ENCODE measurements at regions of chrX and their contacts with region 1.

Region 1: DNA sequence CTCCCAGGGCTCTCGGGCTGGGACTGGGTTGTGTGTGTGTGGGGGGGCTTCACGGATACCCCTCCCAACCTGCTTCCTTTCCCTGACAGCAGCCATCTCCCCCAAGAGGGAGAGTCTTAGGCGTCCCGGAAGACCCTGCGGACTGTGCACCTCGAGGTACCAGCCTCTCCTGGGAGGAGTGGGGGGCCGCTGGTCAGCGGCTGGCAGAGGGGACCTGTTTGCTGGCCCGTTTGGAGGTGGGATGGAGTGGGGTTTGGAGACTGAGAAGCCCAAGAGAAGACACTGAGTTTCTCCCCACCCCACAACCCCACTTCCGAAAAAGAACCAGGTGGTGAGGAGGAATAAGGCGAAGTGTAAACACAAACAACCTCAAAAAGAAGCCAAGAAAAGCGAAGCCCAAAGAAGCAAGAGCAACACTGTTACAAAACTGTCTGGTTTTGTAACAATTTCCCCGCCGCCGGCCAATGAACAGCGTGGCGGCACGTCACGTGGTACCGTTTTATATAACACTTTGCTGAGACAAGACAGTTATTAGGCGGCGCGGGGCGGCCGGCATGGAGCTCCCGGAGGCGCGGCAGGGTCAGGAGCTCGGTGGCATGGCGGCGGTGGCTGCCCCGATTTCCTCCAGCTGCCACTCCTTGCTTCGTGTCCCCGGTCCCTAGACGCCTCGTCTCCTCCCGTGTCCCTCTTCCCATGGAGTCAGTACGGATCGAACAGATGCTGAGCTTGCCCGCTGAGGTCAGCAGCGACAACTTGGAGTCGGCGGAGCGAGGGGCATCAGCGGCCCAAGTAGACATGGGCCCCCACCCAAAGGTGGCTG is at the start of gene LONRF3:
- DNase-seq: peak; percentile 77 to 87
- ATAC-seq: peak; percentile 55 to 75 (median 59)
- H3K4me3 ChIP-seq: peak within 1 kb of the TSS; percentile 85
- H3K27ac ChIP-seq: peak within 1 kb of the TSS; percentile 97
- H3K4me1 ChIP-seq: no peaks in the 10 kb centered on the region
- H3K27me3 ChIP-seq: peaks cover 0 to 15% (median 0%) of the 10 kb centered on the region in 3 donors
- CTCF ChIP-seq: no peak
- total RNA-seq, gene LONRF3: 9.4 to 55.8 (median 27.3) TPM

Region 2: GRCh38 chrX:118862091-118862490 is 112.2 kb before region 1 on chrX:
- intact Hi-C with region 1: loop called (anchors 2 to 10 kb)
- DNase-seq: no peak
- ATAC-seq: no peak
- H3K4me3 ChIP-seq: no peak overlapping the region
- H3K27ac ChIP-seq: no peak overlapping the region
- H3K4me1 ChIP-seq: no peaks in the 10 kb centered on the region
- H3K27me3 ChIP-seq: no peaks in the 10 kb centered on the region
- CTCF ChIP-seq: no peak

Measured in psoas muscle (tissue), 8 donors.